ENCODE measurements at regions of chr10 and their contacts with region 1.

Region 1: GRCh38 chr10:45660876-45661411 is 11.6 kb downstream of the ZFAND4 start:
- DNase-seq: no peak
- H3K4me3 ChIP-seq: no peak overlapping the region
- H3K27ac ChIP-seq: no peak overlapping the region
- H3K4me1 ChIP-seq: no peaks in the 10 kb centered on the region
- H3K27me3 ChIP-seq: no peaks in the 10 kb centered on the region
- CTCF ChIP-seq: no peak
- POLR2A ChIP-seq: no peak

Region 2: GRCh38 chr10:45460235-45460878 is 200.6 kb before region 1 on chr10:
- intact Hi-C with region 1: no loop called
- DNase-seq: no peak
- H3K4me3 ChIP-seq: no peak overlapping the region
- H3K27ac ChIP-seq: no peak overlapping the region
- H3K4me1 ChIP-seq: peaks cover 0 to 4% of the 10 kb centered on the region in 2 donors
- H3K27me3 ChIP-seq: no peaks in the 10 kb centered on the region
- CTCF ChIP-seq: no peak
- POLR2A ChIP-seq: no peak

Region 3: DNA sequence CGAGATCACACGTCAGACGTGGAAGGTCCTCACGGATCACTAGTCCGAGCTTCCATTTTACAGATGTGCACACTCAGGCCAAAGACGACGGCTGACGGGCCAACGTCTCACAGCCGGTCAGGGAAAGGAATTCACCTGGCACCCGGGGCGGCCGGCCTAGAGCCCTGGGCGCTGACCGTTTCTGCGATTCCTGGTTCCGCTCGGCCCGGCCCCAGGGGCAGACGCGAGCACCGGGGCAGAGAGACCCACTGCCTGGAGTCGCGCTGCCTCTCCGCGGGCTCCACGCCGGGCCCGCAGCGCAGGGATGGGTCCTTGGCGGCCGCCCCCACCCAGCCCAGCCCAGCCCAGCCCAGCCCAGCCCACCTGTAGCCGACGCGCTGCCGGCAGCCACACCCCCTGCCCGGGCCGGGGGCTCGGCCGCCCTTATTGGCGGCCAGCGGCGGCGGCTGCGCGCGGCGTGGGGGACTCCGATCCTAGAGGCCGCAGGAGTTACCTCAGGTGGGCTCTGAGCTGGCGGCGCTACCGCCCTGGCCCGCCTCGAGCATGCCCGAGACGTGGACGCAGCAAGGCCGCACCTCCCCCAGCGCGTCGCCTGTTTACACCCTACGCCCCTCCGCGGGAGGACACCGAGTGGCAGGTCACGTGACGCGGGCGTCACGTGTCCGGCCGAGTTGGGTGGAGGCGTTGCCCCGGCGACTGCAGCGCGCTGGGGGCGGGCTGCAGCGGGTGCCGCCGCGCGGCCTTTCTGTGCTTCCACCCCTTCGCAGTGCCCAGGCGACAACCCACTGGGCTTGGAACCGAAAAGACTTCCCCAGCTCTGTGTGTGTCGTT is 66.5 kb before region 1 on chr10:
- intact Hi-C with region 1: loop called (anchors 10 kb)
- DNase-seq: peak; percentile 95
- H3K4me3 ChIP-seq: peak overlapping the region; percentile 7 to 79 (median 61)
- H3K27ac ChIP-seq: peak overlapping the region; percentile 21 to 76 (median 66)
- H3K4me1 ChIP-seq: peaks cover 11 to 12% of the 10 kb centered on the region in 2 donors
- H3K27me3 ChIP-seq: no peaks in the 10 kb centered on the region
- CTCF ChIP-seq: peak in 1 of 6 experiments; percentile 2
- POLR2A ChIP-seq: peak; percentile 2 to 73

Measured in thyroid gland (tissue), 4 donors.